GM12878 (cell line): ENCODE measurements at regions of chr17 and their contacts with region 1.

Region 1: DNA sequence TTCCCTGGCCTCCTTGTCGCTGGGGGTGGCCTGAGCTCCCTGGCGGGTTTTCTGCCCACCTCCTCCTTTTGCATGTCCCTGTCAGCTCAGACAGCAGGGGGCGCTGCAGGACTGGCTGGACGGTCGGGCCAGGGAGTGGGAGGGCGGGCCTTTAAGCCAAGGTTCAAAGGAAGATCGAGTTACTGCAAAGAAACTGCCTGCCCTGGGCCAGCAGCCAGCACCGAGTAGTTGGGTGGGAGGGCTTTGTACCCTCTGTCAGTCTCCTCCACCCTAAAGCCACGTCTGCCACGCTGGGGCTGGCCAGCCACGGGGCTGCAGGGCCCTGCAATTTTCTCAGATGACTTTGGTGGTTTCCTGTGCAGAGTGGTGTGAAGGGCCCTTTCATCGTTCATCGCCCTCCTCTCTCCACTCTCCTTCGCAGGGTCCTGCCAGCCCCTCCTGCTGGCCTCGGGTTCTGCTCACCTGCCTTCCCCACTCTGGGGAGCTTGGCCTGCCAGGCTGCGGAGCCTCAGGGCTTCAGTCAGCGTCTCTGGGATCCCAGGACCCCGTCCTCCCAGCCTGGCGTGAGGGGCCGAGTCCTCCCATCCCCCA is 12.3 kb downstream of the GPR142 start:
- DNase-seq: peak; percentile 40
- ATAC-seq: peak; percentile 98
- H3K4me3 ChIP-seq: no peak overlapping the region
- H3K27ac ChIP-seq: no peak overlapping the region
- H3K4me1 ChIP-seq: no peaks in the 10 kb centered on the region
- H3K27me3 ChIP-seq: no peaks in the 10 kb centered on the region
- CTCF ChIP-seq: peak; percentile 81 to 97 (median 94); a peak in 5 of 6 replicates
- EP300 ChIP-seq: no peak
- POLR2A ChIP-seq: no peak
- RAD21 ChIP-seq: peak; percentile 99

Region 2: GRCh38 chr17:74332763-74333283 is 46.8 kb before region 1 on chr17:
- CTCF ChIA-PET with region 1: no interaction called
- POLR2A ChIA-PET with region 1: no interaction called
- RAD21 ChIA-PET with region 1: no interaction called
- SMC1A ChIA-PET with region 1: no interaction called
- in situ Hi-C with region 1: no loop called
- intact Hi-C with region 1: no loop called
- DNase-seq: no peak
- ATAC-seq: peak; percentile 20; the same call in 1 of the 3 replicates
- H3K4me3 ChIP-seq: no peak overlapping the region
- H3K27ac ChIP-seq: no peak overlapping the region
- H3K4me1 ChIP-seq: peaks cover 3% of the 10 kb centered on the region; the same call in 1 of the 2 replicates
- H3K27me3 ChIP-seq: no peaks in the 10 kb centered on the region
- CTCF ChIP-seq: no peak
- EP300 ChIP-seq: no peak
- POLR2A ChIP-seq: no peak
- RAD21 ChIP-seq: no peak

Region 3: DNA sequence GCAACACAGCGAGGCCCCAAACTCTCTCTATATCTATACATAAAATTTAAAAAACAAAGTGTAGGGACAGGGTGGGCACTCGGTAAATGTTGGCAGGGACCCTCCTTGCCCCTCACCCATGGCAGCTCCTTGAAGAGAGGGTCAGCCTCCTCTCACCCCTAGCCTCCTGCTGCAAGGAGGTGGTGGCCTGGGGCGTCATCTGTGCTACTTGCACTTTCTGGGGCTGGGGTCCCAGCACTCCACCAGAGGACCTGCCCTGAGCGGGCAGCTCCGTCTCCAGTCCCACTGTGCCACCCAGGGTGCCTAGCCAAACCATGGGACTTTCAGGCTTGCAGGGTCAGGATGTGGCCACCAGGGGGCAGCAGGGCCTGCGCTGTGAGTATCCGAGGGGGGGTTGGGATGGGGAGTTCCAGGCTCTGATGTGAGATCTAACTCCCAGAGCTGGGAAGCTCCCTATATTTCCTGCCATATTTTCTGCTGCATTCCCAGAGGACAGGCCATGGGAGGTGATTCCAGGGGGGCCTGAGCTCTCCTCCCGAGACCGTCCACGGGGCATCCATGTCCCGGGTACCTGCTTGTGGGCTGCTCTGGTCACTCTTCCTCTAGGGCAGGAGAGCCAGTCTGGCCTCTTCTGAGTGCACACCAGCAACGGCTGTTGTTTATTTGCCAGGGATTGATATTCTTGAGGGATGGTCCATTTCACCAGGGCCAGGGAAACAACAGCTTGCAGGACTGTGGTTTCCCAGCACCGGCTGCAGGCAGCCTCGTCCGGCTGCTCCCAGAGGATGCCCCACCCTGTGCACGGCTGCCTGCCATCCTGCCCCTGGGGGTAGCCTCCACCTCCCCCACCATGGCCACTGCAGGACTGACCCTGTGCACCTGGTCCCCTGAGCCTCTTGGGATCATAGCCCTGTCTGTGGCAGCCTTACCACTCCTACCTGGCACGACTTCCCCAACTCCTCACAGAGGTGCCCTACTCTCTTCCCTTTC is 11.2 kb before region 1 on chr17:
- CTCF ChIA-PET with region 1: interaction called, 66 read pairs
- POLR2A ChIA-PET with region 1: no interaction called
- RAD21 ChIA-PET with region 1: interaction called, 27 read pairs
- SMC1A ChIA-PET with region 1: interaction called, 39 read pairs
- in situ Hi-C with region 1: no loop called
- intact Hi-C with region 1: no loop called
- DNase-seq: no peak
- ATAC-seq: peak; percentile 93
- H3K4me3 ChIP-seq: no peak overlapping the region
- H3K27ac ChIP-seq: no peak overlapping the region
- H3K4me1 ChIP-seq: peaks cover 7% of the 10 kb centered on the region
- H3K27me3 ChIP-seq: no peaks in the 10 kb centered on the region; a peak in 3 of 4 replicates
- CTCF ChIP-seq: peak; percentile 93 to 97 (median 94)
- EP300 ChIP-seq: no peak
- POLR2A ChIP-seq: no peak
- RAD21 ChIP-seq: peak; percentile 73

Region 4: GRCh38 chr17:74417178-74418045 is 37.8 kb after region 1 on chr17:
- CTCF ChIA-PET with region 1: interaction called, 15 read pairs
- POLR2A ChIA-PET with region 1: no interaction called
- RAD21 ChIA-PET with region 1: interaction called, 16 read pairs
- SMC1A ChIA-PET with region 1: interaction called, 3 read pairs
- in situ Hi-C with region 1: no loop called
- intact Hi-C with region 1: no loop called
- DNase-seq: peak; percentile 56
- ATAC-seq: peak; percentile 96
- H3K4me3 ChIP-seq: no peak overlapping the region
- H3K27ac ChIP-seq: no peak overlapping the region
- H3K4me1 ChIP-seq: peaks cover 4% of the 10 kb centered on the region; the same call in 1 of the 2 replicates
- H3K27me3 ChIP-seq: no peaks in the 10 kb centered on the region
- CTCF ChIP-seq: no peak
- EP300 ChIP-seq: no peak
- POLR2A ChIP-seq: no peak
- RAD21 ChIP-seq: no peak

Region 5: GRCh38 chr17:74493381-74493833 is 113.8 kb after region 1 on chr17:
- CTCF ChIA-PET with region 1: interaction called, 82 read pairs
- POLR2A ChIA-PET with region 1: interaction called, 3 read pairs
- RAD21 ChIA-PET with region 1: interaction called, 11 read pairs
- SMC1A ChIA-PET with region 1: interaction called, 17 read pairs
- in situ Hi-C with region 1: loop called (anchors 5 kb)
- intact Hi-C with region 1: loop called (anchors 1 kb)
- DNase-seq: peak; percentile 28
- ATAC-seq: peak; percentile 92
- H3K4me3 ChIP-seq: no peak overlapping the region
- H3K27ac ChIP-seq: no peak overlapping the region
- H3K4me1 ChIP-seq: no peaks in the 10 kb centered on the region
- H3K27me3 ChIP-seq: no peaks in the 10 kb centered on the region
- CTCF ChIP-seq: peak; percentile 93 to 95 (median 94); a peak in 5 of 6 replicates
- EP300 ChIP-seq: no peak
- POLR2A ChIP-seq: no peak
- RAD21 ChIP-seq: peak; percentile 98

Region 6: GRCh38 chr17:74513987-74514631 is 134.5 kb after region 1 on chr17:
- CTCF ChIA-PET with region 1: interaction called, 10 read pairs
- POLR2A ChIA-PET with region 1: no interaction called
- RAD21 ChIA-PET with region 1: interaction called, 3 read pairs
- SMC1A ChIA-PET with region 1: interaction called, 3 read pairs
- in situ Hi-C with region 1: no loop called
- intact Hi-C with region 1: no loop called
- DNase-seq: peak; percentile 73
- ATAC-seq: no peak
- H3K4me3 ChIP-seq: no peak overlapping the region
- H3K27ac ChIP-seq: no peak overlapping the region
- H3K4me1 ChIP-seq: 0 out of 2 replicates have a peak, but pooled peaks cover 7% of the 10 kb centered on the region
- H3K27me3 ChIP-seq: no peaks in the 10 kb centered on the region
- CTCF ChIP-seq: no peak
- EP300 ChIP-seq: no peak; a peak in 2 of 4 replicates
- POLR2A ChIP-seq: no peak
- RAD21 ChIP-seq: no peak

Region 7: GRCh38 chr17:74601944-74602572 is 222.5 kb after region 1 on chr17:
- CTCF ChIA-PET with region 1: no interaction called
- POLR2A ChIA-PET with region 1: no interaction called
- RAD21 ChIA-PET with region 1: interaction called, 6 read pairs
- SMC1A ChIA-PET with region 1: interaction called, 6 read pairs
- in situ Hi-C with region 1: loop called (anchors 5 kb)
- intact Hi-C with region 1: no loop called
- DNase-seq: no peak
- ATAC-seq: peak; percentile 85
- H3K4me3 ChIP-seq: no peak overlapping the region
- H3K27ac ChIP-seq: no peak overlapping the region
- H3K4me1 ChIP-seq: no peaks in the 10 kb centered on the region; the same call in 1 of the 2 replicates
- H3K27me3 ChIP-seq: peaks cover 2 to 4% of the 10 kb centered on the region in 2 experiments; a peak in 3 of 4 replicates
- CTCF ChIP-seq: peak; percentile 67 to 71 (median 70)
- EP300 ChIP-seq: no peak
- POLR2A ChIP-seq: no peak
- RAD21 ChIP-seq: peak; percentile 73